PC-3 (cell line): ENCODE measurements at regions of chr3 and their contacts with region 1.

Region 1: GRCh38 chr3:168095611-168096209 is at the start of gene GOLIM4:
- DNase-seq: peak; percentile 97
- ATAC-seq: peak; percentile 87
- H3K4me3 ChIP-seq: peak within 1 kb of the TSS; percentile 89
- H3K27ac ChIP-seq: peak within 1 kb of the TSS; percentile 82
- H3K4me1 ChIP-seq: peaks cover 35% of the 10 kb centered on the region
- H3K27me3 ChIP-seq: no peaks in the 10 kb centered on the region
- CTCF ChIP-seq: no peak
- total RNA-seq, gene GOLIM4: 25.3 and 28.5 TPM in 2 replicates

Region 2: DNA sequence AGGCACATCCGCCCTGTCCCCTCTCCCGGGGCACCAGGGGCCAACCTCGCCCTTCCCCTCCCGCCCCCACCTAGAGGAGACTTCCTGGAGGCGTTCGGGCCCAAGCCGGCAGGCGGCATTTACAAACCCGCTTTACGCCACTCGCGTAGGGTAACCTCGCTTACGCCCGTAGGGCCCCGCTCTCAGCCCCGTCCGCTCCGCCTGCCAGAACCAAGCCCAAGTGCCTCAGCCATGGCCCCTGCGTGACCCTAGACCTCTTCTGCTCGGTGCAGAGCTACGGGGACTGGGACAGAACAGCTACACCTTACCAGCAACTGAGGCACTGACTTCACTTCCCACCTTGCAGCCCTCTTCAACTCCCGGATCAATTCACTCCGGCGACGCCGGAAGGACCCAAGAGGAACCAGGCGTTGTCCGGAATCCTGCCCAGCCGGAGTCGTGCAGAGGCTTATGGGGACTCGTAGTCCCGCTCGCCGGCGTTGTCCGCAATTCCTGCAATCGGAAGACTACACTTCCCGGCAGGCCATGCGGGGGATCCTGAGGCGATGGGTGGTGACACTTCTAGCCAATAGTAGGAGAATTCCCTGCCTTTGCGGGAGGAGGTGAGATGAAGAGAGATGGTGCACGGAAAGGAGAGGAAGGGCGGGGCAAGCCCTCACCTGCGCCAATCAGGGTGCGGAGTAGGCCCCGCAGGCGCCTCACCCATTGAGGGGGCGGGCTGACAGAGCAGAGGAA is 361.0 kb before region 1 on chr3 and contains the start of gene PDCD10:
- CTCF ChIA-PET with region 1: no interaction called
- POLR2A ChIA-PET with region 1: no interaction called
- intact Hi-C with region 1: loop called (anchors 10 kb)
- DNase-seq: peak; percentile 99
- ATAC-seq: peak; percentile 86
- H3K4me3 ChIP-seq: peak within 1 kb of the TSS; percentile 87
- H3K27ac ChIP-seq: peak within 1 kb of the TSS; percentile 78
- H3K4me1 ChIP-seq: peaks cover 31% of the 10 kb centered on the region
- H3K27me3 ChIP-seq: no peaks in the 10 kb centered on the region
- CTCF ChIP-seq: no peak
- total RNA-seq, gene PDCD10: 80.5 and 105 TPM in 2 replicates

Region 3: GRCh38 chr3:168061332-168061996 is 34.2 kb before region 1 on chr3:
- CTCF ChIA-PET with region 1: interaction called, 6 read pairs
- POLR2A ChIA-PET with region 1: interaction called, 3 read pairs
- intact Hi-C with region 1: loop called (anchors 2 kb)
- DNase-seq: peak; percentile 28
- ATAC-seq: peak; percentile 91
- H3K4me3 ChIP-seq: 0 out of 2 replicates have a peak overlapping the region, but pooled peaks have one; percentile 3
- H3K27ac ChIP-seq: no peak overlapping the region
- H3K4me1 ChIP-seq: peaks cover 7% of the 10 kb centered on the region; the same call in 1 of the 2 replicates
- H3K27me3 ChIP-seq: no peaks in the 10 kb centered on the region
- CTCF ChIP-seq: peak; percentile 51

Region 4: GRCh38 chr3:168121184-168122017 is 25.7 kb after region 1 on chr3:
- CTCF ChIA-PET with region 1: no interaction called
- POLR2A ChIA-PET with region 1: no interaction called
- intact Hi-C with region 1: loop called (anchors 1 kb)
- DNase-seq: no peak
- ATAC-seq: no peak
- H3K4me3 ChIP-seq: no peak overlapping the region
- H3K27ac ChIP-seq: no peak overlapping the region
- H3K4me1 ChIP-seq: peaks cover 18% of the 10 kb centered on the region
- H3K27me3 ChIP-seq: no peaks in the 10 kb centered on the region
- CTCF ChIP-seq: no peak

Region 5: DNA sequence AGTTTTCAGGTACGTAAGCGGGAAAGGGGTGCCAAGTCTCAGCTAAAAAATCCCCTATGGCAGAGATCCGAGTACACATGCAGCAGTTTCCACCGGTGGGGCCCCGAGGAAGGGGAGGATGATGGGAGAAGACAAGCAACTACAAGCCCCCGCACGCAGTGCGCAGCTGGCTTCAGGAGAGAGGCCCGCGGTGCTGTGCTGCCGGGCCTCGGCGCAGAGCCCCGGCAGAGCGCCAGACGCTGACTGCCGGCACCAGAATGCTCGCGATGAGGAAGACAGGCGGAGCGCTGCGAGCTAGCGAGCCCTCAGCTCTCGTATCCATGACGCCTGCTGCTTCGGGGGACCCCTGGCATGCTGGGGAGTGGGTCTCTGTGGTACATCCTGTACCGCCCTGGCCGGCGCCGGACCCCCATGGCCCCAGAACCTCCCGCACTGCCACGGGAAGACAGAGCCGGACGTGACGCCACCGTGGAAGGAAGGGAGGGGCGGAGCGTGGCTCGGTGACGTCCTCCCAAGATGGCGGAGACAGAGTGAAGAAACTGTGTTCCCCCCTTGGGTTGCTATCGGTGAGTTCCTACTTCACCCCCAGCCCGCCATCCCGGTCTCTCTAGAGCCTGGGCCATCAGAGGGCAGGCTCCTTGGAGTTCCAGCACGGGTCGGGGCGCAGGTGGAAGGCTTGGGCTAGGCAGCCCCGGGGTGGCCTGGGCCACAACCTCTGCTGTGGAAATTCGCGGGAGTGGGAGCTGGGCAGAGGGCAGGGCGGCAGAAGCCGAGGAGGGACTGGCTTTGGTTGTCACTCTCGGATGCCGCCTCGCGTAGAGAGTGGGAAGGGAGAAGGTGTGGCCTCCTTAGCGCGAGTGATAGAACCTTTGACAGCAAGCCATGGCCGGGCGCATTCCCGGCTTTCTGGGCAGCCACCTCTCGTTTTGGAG is 1677.5 kb after region 1 on chr3 and contains the start of gene MYNN:
- CTCF ChIA-PET with region 1: no interaction called
- POLR2A ChIA-PET with region 1: no interaction called
- intact Hi-C with region 1: loop called (anchors 5 kb)
- DNase-seq: peak; percentile 86
- ATAC-seq: peak; percentile 82
- H3K4me3 ChIP-seq: peak within 1 kb of the TSS; percentile 96
- H3K27ac ChIP-seq: peak within 1 kb of the TSS; percentile 90
- H3K4me1 ChIP-seq: peaks cover 16% of the 10 kb centered on the region
- H3K27me3 ChIP-seq: no peaks in the 10 kb centered on the region
- CTCF ChIP-seq: no peak
- total RNA-seq, gene MYNN: 7.4 and 12.9 TPM in 2 replicates